A673 (cell line): ENCODE measurements at regions of chr2 and their contacts with region 1.

Region 1: DNA sequence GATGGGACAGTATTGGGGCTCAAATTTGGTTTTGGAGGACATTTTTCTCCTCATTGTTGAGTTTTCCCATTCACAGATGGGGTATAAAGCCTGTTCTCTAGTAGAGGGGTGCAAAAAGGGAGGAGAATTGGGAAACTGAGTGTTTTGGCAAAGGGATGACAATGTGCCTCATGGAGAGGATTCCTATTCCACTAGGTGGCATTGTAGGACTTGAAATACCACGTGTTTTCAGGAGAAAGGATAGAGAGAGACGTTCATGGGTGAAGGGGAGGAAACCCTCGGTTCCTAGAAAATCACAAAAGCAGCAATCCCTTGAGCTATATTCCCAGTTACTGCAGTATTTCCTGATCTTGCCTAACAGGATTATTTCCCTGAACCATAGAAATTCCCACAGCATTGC is 113.7 kb upstream of the SRD5A2 start:
- DNase-seq: peak; percentile 37
- H3K4me3 ChIP-seq: no peak overlapping the region
- H3K27ac ChIP-seq: no peak overlapping the region
- H3K4me1 ChIP-seq: no peaks in the 10 kb centered on the region
- H3K27me3 ChIP-seq: no peaks in the 10 kb centered on the region
- CTCF ChIP-seq: 0 out of 2 replicates have a peak, but pooled peaks have one; percentile 28

Region 2: DNA sequence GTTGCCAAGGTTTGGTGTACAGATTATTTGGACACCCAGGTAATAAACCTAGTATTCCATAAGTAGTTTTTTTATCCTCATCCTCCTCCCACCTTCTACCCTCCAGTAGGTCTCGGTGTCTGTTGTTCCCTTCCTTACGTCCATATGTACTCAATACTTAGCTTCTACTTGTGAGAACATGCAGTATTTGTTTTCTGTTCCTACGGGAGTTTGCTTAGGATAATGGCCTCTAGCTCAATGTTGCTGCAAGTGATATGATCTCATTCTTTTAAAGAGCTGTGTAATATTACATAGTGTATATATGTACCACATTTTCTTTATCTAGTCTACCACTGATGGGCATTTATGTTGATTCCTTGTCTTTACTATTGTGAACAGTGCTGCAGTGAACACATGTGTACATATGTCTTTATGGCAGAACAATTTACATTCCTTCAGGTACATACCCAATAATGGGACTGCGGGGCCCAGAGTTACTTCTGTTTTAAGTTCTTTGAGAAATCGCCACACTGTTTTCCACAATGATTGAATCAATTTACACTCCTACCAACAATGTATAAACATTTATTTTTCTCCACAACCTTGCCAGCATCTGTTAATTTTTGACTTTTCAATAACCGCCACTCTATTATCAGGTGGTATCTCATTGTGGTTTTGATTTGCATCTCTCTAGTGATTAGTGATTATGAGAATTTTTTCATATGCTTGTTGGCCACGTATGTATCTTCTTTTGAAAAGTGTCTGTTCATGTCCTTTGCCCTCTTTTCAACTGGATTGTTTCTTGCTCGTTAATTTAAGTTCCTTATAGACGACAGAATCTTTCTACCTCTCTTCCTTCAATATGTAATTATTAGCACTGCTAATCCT is 228.3 kb after region 1 on chr2:
- CTCF ChIA-PET with region 1: no interaction called
- POLR2A ChIA-PET with region 1: interaction called, 12 read pairs
- intact Hi-C with region 1: no loop called
- DNase-seq: no peak
- H3K4me3 ChIP-seq: no peak overlapping the region
- H3K27ac ChIP-seq: no peak overlapping the region
- H3K4me1 ChIP-seq: no peaks in the 10 kb centered on the region
- H3K27me3 ChIP-seq: no peaks in the 10 kb centered on the region
- CTCF ChIP-seq: no peak